ENCODE measurements at regions of chr10 and their contacts with region 1.

Region 1: GRCh38 chr10:78302989-78303854 is 269.6 kb downstream of the RPS24 start:
- DNase-seq: peak; percentile 94 to 96
- ATAC-seq: peak; percentile 84 to 96 (median 85)
- H3K4me3 ChIP-seq: peak overlapping the region; percentile 64
- H3K4me3 Mint-ChIP-seq: peak overlapping the region; percentile 87
- H3K27ac ChIP-seq: peak overlapping the region; percentile 89
- H3K27ac Mint-ChIP-seq: peak overlapping the region; percentile 92 to 98
- H3K4me1 ChIP-seq: peaks cover 30% of the 10 kb centered on the region
- H3K4me1 Mint-ChIP-seq: peaks cover 10 to 23% of the 10 kb centered on the region in 2 donors
- H3K27me3 ChIP-seq: no peaks in the 10 kb centered on the region
- H3K27me3 Mint-ChIP-seq: peaks cover 11 to 14% of the 10 kb centered on the region in 2 donors
- CTCF ChIP-seq: peak; percentile 79

Region 2: GRCh38 chr10:78029269-78030226 is 273.7 kb before region 1 on chr10 and contains the start of gene POLR3A:
- intact Hi-C with region 1: loop called (anchors 2 kb)
- DNase-seq: peak; percentile 92 to 97
- ATAC-seq: peak; percentile 50 to 79 (median 69)
- H3K4me3 ChIP-seq: peak within 1 kb of the TSS; percentile 98
- H3K4me3 Mint-ChIP-seq: peak within 1 kb of the TSS; percentile 100
- H3K27ac ChIP-seq: peak within 1 kb of the TSS; percentile 69
- H3K27ac Mint-ChIP-seq: peak within 1 kb of the TSS; percentile 88 to 98
- H3K4me1 ChIP-seq: peaks cover 19% of the 10 kb centered on the region
- H3K4me1 Mint-ChIP-seq: peaks cover 38 to 39% of the 10 kb centered on the region in 2 donors
- H3K27me3 ChIP-seq: no peaks in the 10 kb centered on the region
- H3K27me3 Mint-ChIP-seq: no peaks in the 10 kb centered on the region
- CTCF ChIP-seq: peak; percentile 67
- total RNA-seq, gene POLR3A: 15.6 to 21.0 (median 17.9) TPM

Region 3: GRCh38 chr10:78255796-78256638 is 47.2 kb before region 1 on chr10:
- intact Hi-C with region 1: no loop called
- DNase-seq: no peak
- ATAC-seq: peak in 1 of 3 donors; percentile 77
- H3K4me3 ChIP-seq: no peak overlapping the region
- H3K4me3 Mint-ChIP-seq: no peak overlapping the region
- H3K27ac ChIP-seq: no peak overlapping the region
- H3K27ac Mint-ChIP-seq: no peak overlapping the region
- H3K4me1 ChIP-seq: peaks cover 6% of the 10 kb centered on the region
- H3K4me1 Mint-ChIP-seq: peaks cover 2% of the 10 kb centered on the region in 2 donors
- H3K27me3 ChIP-seq: no peaks in the 10 kb centered on the region
- H3K27me3 Mint-ChIP-seq: peaks cover 12 to 13% of the 10 kb centered on the region in 2 donors
- CTCF ChIP-seq: no peak

Measured in natural killer cell (primary cell).